ENCODE measurements at regions of chr12 and their contacts with region 1.

Region 1: DNA sequence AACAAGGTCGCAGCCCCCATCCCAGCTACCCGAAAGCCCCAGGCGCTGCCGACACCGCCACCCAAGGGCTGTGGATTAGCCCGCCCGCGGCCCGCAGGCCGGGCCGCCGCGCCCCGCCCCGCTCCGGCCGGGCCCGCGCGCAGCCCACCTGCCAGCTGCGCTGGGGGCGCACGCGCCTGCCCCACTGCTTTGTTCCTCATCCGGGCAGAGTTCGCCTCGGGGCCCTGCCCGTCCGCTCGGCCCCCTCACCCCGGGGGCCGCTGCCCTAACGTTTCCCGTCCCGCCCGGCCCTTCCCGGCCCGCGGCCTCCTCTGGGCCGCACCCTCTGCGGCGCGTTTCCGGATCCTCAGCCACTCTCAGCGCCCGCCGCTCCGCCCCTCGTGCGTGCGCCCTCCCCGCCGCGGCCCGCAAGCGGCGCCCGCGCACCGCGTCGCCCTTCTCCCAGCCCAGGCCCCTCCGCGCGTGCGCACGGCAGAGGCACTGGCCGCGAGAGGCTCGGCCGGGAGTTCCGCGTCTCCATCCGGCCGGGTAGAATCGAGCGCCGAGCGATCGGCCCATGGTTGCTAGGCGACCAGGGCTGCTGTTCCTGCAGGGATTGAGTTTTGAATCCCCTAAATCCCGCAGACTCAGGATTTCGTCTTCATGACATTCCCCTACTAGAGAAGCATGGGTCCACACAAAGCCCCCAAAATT is at the start of gene PRDM4:
- DNase-seq: peak; percentile 85 to 96 (median 93)
- ATAC-seq: peak; percentile 99
- H3K4me3 ChIP-seq: peak within 1 kb of the TSS; percentile 83
- H3K4me3 Mint-ChIP-seq: peak within 1 kb of the TSS; percentile 85 to 94 (median 91)
- H3K27ac ChIP-seq: peak within 1 kb of the TSS; percentile 78
- H3K27ac Mint-ChIP-seq: peak within 1 kb of the TSS; percentile 85 to 96 (median 91)
- H3K4me1 ChIP-seq: peaks cover 21% of the 10 kb centered on the region in 2 donors
- H3K4me1 Mint-ChIP-seq: peaks cover 19 to 52% (median 35%) of the 10 kb centered on the region in 7 donors
- H3K27me3 ChIP-seq: no peaks in the 10 kb centered on the region
- H3K27me3 Mint-ChIP-seq: peaks cover 0 to 5% (median 0%) of the 10 kb centered on the region in 5 donors
- total RNA-seq, gene PRDM4: 32.4 to 41.3 (median 36.4) TPM

Region 2: GRCh38 chr12:106955377-106956047 is 805.4 kb before region 1 on chr12 and contains the start of gene TMEM263:
- CTCF ChIA-PET with region 1: no interaction called
- POLR2A ChIA-PET with region 1: no interaction called
- intact Hi-C with region 1: loop called in 1 of 2 experiments (anchors 10 kb)
- DNase-seq: peak; percentile 78 to 91 (median 86)
- ATAC-seq: peak; percentile 90
- H3K4me3 ChIP-seq: peak within 1 kb of the TSS; percentile 94
- H3K4me3 Mint-ChIP-seq: peak within 1 kb of the TSS; percentile 88 to 99 (median 96)
- H3K27ac ChIP-seq: peak within 1 kb of the TSS; percentile 94
- H3K27ac Mint-ChIP-seq: peak within 1 kb of the TSS; percentile 93 to 97 (median 96)
- H3K4me1 ChIP-seq: peaks cover 8 to 10% of the 10 kb centered on the region in 2 donors
- H3K4me1 Mint-ChIP-seq: peaks cover 17 to 57% (median 38%) of the 10 kb centered on the region in 7 donors
- H3K27me3 ChIP-seq: no peaks in the 10 kb centered on the region
- H3K27me3 Mint-ChIP-seq: peaks cover 0 to 11% (median 0%) of the 10 kb centered on the region in 5 donors
- total RNA-seq, gene TMEM263: 20.0 to 45.5 (median 31.5) TPM

Region 3: DNA sequence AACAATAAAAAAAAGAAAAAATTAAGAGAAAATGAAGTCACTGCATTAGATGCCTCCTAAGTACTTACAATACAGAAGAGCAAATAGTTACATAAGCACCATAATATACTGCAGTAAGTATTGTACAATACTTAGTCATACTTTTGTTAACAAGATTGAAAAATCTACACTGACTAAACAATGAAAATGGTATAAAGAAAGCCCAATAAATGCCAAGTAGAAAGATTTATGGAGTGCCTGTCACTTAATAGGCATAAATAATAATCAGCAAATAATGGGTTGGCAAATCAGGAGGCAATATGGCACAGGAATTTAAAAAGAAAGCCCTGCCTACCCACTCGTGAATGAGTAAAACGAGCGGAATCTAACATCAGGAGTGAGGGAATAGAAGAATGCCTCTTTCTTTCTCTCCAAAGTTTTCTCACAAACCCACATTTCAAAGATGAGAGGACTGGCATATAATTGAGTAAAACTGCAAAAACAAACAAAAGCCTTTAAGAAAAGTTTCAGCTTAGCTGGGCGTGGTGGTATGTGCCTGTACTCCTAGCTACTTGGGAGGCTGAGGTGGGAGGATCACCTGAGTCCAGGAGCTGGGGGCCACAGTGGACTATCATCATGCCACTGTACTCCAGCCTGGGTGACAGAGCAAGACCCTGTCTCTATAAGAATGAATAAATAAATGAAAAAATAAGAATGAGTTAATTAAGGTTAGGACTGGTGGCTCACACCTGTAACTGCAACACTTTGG is 703.7 kb before region 1 on chr12:
- CTCF ChIA-PET with region 1: no interaction called
- POLR2A ChIA-PET with region 1: no interaction called
- intact Hi-C with region 1: no loop called
- DNase-seq: no peak
- ATAC-seq: no peak
- H3K4me3 ChIP-seq: no peak overlapping the region
- H3K4me3 Mint-ChIP-seq: no peak overlapping the region
- H3K27ac ChIP-seq: no peak overlapping the region
- H3K27ac Mint-ChIP-seq: peak overlapping the region in 1 of 9 donors; percentile 26
- H3K4me1 ChIP-seq: peaks cover 0 to 3% of the 10 kb centered on the region in 2 donors
- H3K4me1 Mint-ChIP-seq: peaks cover 0 to 28% (median 20%) of the 10 kb centered on the region in 7 donors
- H3K27me3 ChIP-seq: no peaks in the 10 kb centered on the region
- H3K27me3 Mint-ChIP-seq: no peaks in the 10 kb centered on the region

Region 4: DNA sequence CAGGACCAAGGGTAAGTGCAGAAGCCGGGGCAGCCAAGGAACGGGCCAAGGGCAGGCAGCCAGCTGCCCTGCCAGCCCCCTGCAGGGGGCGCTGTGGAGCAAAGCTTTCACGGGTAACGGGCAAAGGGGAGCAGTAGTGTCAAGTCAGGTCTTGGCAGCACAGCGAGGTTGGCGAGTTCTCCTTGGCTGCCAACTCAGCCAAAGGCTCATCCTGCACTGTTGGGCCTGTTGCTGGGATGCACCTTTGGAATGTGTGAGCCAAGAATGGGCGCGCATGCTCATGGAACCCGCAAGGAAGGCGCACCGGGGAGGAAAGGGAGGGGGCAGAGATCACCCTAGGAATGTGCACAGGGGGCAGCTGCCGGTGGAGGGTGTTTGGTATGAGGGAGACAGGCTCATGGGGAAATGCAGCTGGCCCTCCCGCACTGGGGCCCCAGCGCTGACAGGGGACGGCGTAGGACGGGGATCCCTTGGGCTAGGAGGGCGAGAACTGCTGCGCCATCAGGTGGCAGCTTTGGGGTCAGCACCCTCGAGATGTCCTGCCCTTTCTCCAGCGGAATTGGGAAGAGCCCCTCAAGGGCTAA is 151.6 kb after region 1 on chr12:
- CTCF ChIA-PET with region 1: no interaction called
- POLR2A ChIA-PET with region 1: no interaction called
- intact Hi-C with region 1: loop called in 1 of 2 experiments (anchors 1 kb)
- DNase-seq: peak in 7 of 9 donors; percentile 26 to 78 (median 41)
- ATAC-seq: peak; percentile 74
- H3K4me3 ChIP-seq: no peak overlapping the region
- H3K4me3 Mint-ChIP-seq: peak overlapping the region; percentile 65 to 91 (median 74)
- H3K27ac ChIP-seq: no peak overlapping the region
- H3K27ac Mint-ChIP-seq: peak overlapping the region in 1 of 9 donors; percentile 61
- H3K4me1 ChIP-seq: no peaks in the 10 kb centered on the region
- H3K4me1 Mint-ChIP-seq: peaks cover 0 to 7% (median 5%) of the 10 kb centered on the region in 7 donors
- H3K27me3 ChIP-seq: no peaks in the 10 kb centered on the region
- H3K27me3 Mint-ChIP-seq: peaks cover 33 to 70% (median 54%) of the 10 kb centered on the region in 5 donors

Region 5: DNA sequence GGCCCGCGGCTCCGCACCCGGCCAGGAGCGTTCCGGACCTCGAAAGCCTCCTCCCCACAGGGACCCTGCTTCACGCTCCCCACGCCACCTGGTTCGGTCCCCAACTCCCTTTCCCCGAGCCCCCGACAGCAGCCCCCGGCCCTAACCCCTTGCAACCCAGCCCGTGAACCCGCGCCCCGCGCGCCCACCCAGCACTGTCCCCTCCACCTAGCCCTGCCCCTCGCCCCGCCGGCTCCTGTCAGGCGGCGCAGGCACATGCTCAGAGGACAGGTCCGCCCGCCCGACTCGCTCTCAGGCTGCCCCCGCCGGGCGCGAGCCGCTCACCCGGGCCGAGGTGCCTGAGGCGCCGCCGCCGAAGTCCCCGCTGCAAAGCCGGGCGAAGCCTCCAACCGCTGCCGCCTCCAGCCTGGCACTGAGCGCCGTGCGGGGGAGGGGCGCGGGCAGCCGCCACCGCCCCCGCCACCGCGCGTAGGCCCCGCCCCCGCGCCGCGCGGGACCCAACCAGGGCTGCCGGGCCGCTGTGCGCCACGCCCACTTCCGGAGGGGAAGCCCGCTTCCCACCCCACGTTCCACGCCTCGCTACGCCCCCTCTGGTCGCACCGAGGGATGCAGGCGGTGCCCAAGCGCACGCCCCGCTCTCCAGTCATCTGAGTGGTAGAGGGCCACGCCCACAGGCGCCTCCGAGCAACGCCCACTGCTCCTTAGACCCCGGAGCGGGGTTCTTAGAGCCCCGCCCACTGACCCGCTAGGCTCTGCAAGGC is 970.3 kb after region 1 on chr12 and contains the start of gene CORO1C:
- CTCF ChIA-PET with region 1: no interaction called
- POLR2A ChIA-PET with region 1: no interaction called
- intact Hi-C with region 1: loop called in 1 of 2 experiments (anchors 2 kb)
- DNase-seq: peak; percentile 90 to 99 (median 94)
- ATAC-seq: peak; percentile 88
- H3K4me3 ChIP-seq: peak within 1 kb of the TSS; percentile 99
- H3K4me3 Mint-ChIP-seq: peak within 1 kb of the TSS; percentile 94 to 99 (median 96)
- H3K27ac ChIP-seq: peak within 1 kb of the TSS; percentile 78
- H3K27ac Mint-ChIP-seq: peak within 1 kb of the TSS; percentile 79 to 98 (median 96)
- H3K4me1 ChIP-seq: peaks cover 4 to 6% of the 10 kb centered on the region in 2 donors
- H3K4me1 Mint-ChIP-seq: peaks cover 0 to 44% (median 19%) of the 10 kb centered on the region in 7 donors
- H3K27me3 ChIP-seq: no peaks in the 10 kb centered on the region
- H3K27me3 Mint-ChIP-seq: peaks cover 0 to 9% (median 0%) of the 10 kb centered on the region in 5 donors
- total RNA-seq, gene CORO1C: 7.6 to 71.8 (median 15.7) TPM

Region 6: DNA sequence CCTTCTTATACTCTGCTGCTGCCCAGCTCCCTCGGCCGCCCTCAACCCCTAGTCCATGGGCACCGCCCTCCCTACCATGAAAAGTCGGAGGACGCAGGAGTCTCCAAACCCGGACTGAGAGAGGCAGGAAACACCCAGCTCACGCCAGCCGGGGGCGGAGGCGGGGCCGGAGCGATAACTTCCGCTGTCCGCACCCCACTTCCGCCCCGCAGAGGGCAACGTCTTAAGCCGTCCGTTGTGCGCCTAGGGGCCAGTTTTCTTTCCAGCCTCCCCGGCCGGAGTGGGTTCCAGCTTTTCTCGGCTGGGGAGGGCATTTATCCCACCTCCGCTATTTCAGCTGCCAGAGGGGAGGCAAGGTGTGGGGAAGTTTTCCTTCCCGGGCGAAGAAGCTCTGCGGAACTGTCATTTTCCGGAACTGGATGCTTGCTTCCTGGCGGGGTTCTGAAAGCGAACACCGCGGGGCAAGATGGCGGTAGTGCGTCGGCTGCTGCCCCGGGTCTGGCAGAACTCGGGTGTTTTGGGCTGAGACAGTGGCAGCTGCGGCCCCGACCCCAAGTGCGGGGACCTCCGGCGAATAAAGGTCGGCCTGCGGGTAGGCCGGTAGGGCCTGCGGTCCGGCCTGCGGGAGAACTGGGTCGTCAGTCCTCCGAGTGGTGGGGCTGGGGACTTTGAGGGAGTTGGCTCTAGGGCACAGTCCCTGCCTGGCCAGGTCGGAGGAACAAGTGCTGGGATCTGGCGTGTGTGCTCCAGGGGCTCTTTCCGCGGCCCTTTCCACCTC is 1716.4 kb after region 1 on chr12 and contains the starts of genes KCTD10 and UBE3B:
- CTCF ChIA-PET with region 1: no interaction called
- POLR2A ChIA-PET with region 1: no interaction called
- intact Hi-C with region 1: loop called in 1 of 2 experiments (anchors 5 kb)
- DNase-seq: peak; percentile 81 to 90 (median 87)
- ATAC-seq: peak; percentile 97
- H3K4me3 ChIP-seq: peak within 1 kb of the TSS; percentile 93
- H3K4me3 Mint-ChIP-seq: peak within 1 kb of the TSS; percentile 89 to 99 (median 96)
- H3K27ac ChIP-seq: peak within 1 kb of the TSS; percentile 90
- H3K27ac Mint-ChIP-seq: peak within 1 kb of the TSS; percentile 96 to 99 (median 98)
- H3K4me1 ChIP-seq: peaks cover 21 to 26% of the 10 kb centered on the region in 2 donors
- H3K4me1 Mint-ChIP-seq: peaks cover 24 to 60% (median 49%) of the 10 kb centered on the region in 7 donors
- H3K27me3 ChIP-seq: no peaks in the 10 kb centered on the region
- H3K27me3 Mint-ChIP-seq: no peaks in the 10 kb centered on the region
- total RNA-seq, gene KCTD10: 28.6 to 41.1 (median 29.1) TPM
- total RNA-seq, gene UBE3B: 28.7 to 62.8 (median 35.6) TPM

Measured in naive thymus-derived CD4-positive, alpha-beta T cell (primary cell).